Left colon (tissue), 2 donors: ENCODE measurements at regions of chr6 and their contacts with region 1.

Region 1: GRCh38 chr6:26329763-26330511 is 35.1 kb upstream of the BTN3A2 start:
- DNase-seq: no peak
- ATAC-seq: peak; percentile 57

Region 2: DNA sequence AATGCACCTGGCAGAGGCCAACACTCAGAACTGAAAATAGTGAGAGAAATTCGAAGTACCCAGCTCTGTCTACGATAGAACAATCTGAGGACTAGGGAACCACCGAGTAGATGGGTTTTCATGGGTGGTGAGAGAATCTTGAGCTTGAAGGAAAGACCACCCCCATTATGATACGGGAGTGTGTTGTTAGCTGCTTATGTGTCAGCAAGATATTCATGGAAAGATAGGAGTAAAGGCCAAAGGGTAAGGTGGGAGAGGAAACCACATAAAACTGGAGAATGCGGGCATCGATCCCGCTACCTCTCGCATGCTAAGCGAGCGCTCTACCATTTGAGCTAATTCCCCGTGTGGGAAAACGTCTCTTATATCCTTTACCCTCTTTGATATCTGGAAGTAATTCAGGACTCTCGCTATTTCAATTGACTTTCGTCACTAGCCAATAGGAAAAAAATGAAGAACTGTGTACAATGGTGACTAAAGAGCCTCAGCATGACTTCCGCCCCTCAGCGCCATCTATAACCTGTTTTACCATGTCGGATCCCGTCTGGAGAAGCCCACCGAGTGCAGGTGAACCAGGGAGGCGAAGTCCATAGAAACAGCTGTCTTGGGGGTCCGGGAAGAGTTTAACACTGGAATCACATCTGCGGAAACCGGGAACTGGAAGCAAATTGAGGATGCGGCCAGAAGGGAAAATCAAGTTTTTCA is 241.8 kb after region 1 on chr6:
- intact Hi-C with region 1: loop called in 1 of 2 experiments (anchors 10 kb)
- DNase-seq: peak in 1 of 2 donors; percentile 53
- ATAC-seq: peak; percentile 63